RWPE1 (cell line): ENCODE measurements at regions of chr21 and their contacts with region 1.

Region 1: DNA sequence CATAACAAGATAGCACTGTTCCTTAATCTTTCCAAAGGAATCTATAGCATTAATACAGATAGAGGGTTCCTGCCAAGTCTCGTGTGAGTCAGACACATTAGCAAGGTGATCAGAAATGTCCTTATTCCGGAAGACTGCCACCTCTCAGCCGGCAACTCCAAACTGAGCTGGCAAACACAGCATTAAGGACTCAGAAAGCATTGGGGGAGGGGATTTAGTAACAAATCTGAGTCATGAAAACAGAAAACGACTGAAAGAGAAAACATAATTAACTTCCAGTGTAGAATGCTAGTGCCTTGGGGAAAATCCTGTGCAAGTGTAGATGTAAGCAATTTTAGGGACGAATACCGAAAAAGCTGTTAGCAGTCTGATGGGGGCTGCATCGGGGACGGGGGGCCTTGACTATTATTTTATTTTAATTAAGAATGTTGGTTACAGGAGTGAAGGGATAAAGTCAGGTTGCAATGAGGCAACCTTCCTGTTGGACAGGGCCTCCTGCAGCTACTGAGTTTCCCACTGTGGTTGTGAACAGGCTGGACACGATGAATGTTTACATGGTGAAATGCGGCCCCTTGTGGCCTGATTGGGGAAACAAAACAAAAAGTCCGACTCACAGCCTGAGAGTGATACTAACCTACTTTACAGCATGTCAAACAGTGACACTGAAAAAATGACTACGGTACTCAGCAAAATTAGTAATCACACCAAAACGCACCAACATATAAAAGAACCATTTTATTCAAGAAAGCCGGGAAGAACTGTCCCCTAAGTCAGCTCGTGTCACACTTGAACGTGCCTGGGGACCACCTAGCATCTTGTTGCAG is 20.7 kb downstream of the MIS18A start:
- DNase-seq: peak; percentile 76
- H3K27ac ChIP-seq: no peak overlapping the region
- CTCF ChIP-seq: peak; percentile 68

Region 2: GRCh38 chr21:31781737-31782136 is 476.4 kb before region 1 on chr21:
- CTCF ChIA-PET with region 1: interaction called, 10 read pairs
- POLR2A ChIA-PET with region 1: no interaction called
- DNase-seq: no peak
- H3K27ac ChIP-seq: no peak overlapping the region
- CTCF ChIP-seq: no peak

Region 3: DNA sequence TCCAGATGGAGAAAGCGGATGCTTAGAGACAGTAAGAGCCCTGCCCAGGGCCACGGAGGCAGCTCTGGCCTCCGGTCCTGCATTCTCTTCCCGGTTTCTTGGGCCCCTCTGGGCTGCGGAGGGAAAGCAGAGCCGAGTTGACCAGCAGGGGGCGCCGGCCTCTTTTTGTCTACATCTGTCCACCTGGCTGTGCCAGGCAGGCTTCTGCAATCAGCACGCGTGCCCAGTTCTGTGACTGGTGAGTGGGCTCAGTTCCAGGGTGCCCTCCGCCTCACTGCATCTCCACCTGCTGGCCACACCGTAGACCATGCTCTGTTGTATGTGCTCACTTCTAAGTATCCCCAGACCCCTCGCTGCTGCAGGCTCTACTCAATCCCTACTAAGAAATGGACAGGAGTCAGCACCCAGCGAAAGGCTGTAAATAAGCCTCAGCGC is 392.1 kb before region 1 on chr21:
- CTCF ChIA-PET with region 1: interaction called, 11 read pairs
- POLR2A ChIA-PET with region 1: no interaction called
- DNase-seq: peak; percentile 59
- H3K27ac ChIP-seq: no peak overlapping the region
- CTCF ChIP-seq: peak; percentile 64